ENCODE measurements at regions of chr17 and their contacts with region 1.

Region 1: DNA sequence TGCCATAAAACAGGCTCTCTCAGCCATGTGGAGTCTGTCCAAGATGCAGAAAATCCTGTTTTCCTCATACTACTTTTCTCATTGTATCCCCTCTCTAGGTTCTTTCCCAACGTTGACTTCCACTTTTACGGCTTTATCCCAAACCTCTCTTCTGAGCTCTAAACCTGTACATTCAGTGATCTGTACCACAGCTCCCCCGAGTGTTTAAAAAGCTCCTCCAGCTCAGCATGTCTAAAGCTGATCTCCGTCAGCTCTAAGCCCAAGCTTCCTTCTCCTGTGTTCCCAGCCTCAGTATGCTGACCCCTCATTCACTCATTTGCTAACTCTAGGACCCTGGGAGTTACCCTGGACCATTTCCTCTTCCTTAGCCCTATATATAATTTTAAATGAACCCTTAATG is 144.6 kb downstream of the DNAH9 start:
- DNase-seq: no peak
- ATAC-seq: no peak
- H3K4me3 ChIP-seq: no peak overlapping the region
- H3K27ac ChIP-seq: no peak overlapping the region
- H3K4me1 ChIP-seq: no peaks in the 10 kb centered on the region
- H3K27me3 ChIP-seq: peaks cover 0 to 12% (median 0%) of the 10 kb centered on the region in 7 donors
- CTCF ChIP-seq: peak in 4 of 9 donors; percentile 7 to 43 (median 17)

Region 2: DNA sequence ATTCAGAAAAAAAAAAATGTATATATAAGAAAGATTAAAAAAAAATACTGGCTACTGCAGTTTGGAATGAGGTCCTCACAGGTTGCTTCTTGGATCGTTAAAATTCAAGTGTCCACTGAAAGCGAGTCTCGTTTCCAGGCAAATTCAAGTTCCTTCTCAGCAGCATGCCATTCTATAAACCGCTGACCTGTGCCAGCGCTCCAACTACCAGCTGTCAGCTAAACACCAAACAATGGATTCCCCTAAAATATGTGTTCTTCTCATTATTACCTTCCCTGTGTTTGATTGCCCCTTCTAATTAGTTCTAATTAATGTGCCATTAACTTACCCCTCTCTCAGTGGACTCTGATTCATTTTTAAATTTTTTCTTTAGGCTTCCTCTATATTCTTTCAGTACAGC is 52.2 kb before region 1 on chr17:
- intact Hi-C with region 1: loop called in 1 of 10 experiments (anchors 5 kb)
- DNase-seq: no peak
- ATAC-seq: no peak
- H3K4me3 ChIP-seq: no peak overlapping the region
- H3K27ac ChIP-seq: no peak overlapping the region
- H3K4me1 ChIP-seq: no peaks in the 10 kb centered on the region
- H3K27me3 ChIP-seq: peaks cover 0 to 7% (median 0%) of the 10 kb centered on the region in 7 donors
- CTCF ChIP-seq: no peak

Region 3: DNA sequence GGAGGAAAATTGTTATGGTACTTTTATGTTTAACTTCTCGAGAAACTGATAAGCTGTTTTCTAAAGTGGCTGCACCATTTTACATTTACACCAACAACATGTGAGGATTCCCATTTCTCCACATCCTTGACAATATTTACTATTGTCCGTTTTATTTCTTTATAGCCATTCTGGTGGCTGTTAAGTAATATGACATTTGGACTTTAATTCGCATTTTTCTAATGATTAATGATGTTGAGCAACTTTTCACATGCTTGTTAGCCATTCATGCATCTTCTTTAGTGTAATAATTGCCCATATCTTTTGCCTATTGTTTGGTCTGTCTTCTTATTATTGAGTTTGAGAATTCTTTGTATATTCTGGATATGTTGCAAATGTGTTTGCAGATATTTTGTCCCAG is 30.4 kb before region 1 on chr17:
- intact Hi-C with region 1: no loop called
- DNase-seq: no peak
- ATAC-seq: no peak
- H3K4me3 ChIP-seq: no peak overlapping the region
- H3K27ac ChIP-seq: no peak overlapping the region
- H3K4me1 ChIP-seq: no peaks in the 10 kb centered on the region
- H3K27me3 ChIP-seq: peaks cover 0 to 13% (median 0%) of the 10 kb centered on the region in 7 donors
- CTCF ChIP-seq: no peak

Region 4: DNA sequence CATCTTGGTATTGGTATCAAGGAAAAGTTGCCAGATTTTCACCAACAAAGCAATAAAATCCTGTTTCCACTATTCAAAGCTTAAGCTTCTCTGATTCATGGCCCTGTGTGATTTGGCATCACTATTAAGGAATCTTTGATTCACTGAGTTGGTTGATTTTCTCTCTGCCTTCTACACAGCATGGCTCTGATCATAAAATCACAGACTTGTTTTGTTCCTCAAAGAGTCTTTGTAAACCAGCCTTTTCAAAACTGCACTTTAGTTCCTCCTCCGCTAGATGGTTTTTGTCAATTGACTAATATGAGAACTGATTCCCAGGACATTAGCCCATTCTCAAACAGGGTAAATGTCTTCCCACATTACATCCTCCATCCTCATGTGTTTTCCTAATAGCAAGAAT is 53.0 kb after region 1 on chr17:
- intact Hi-C with region 1: no loop called
- DNase-seq: no peak
- ATAC-seq: no peak
- H3K4me3 ChIP-seq: no peak overlapping the region
- H3K27ac ChIP-seq: no peak overlapping the region
- H3K4me1 ChIP-seq: no peaks in the 10 kb centered on the region
- H3K27me3 ChIP-seq: no peaks in the 10 kb centered on the region
- CTCF ChIP-seq: no peak

Region 5: DNA sequence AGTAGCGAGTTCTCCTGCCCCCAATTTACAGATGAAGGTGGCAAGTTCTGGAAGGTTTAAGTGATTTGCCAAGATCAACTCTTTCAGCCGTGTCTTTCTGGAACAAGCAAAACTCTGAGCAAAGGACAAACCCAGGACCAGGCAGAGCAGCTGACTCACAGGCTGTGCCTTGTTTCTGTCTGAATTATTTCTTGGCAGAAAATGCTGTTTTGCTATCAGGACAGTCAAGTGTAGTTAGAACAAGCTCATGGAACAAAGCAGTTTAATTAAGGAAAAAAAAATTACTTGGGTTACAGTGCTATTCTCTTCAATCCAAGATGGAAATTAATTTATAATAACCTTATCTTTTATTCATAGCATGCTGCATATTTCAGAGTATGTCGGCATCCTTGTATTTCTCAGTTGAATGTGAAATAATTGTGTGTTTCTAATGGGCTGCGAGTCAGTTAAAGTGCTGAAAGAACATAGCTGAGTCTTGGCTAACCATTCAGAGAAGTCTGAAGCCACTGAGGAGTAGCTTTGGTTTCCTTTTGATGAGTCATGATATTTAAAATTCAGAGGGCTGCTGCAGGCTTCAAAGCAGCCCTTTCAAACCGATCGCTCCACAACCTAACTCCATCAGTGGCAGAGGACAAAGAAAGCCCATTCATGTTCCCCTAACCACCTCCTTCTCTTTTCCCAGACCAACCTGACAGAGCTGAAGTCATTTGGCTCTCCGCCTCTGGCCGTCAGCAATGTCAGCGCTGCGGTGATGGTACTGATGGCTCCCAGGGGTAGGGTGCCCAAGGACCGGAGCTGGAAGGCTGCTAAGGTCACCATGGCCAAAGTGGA is 110.7 kb after region 1 on chr17:
- intact Hi-C with region 1: no loop called
- DNase-seq: no peak
- ATAC-seq: peak in 6 of 8 donors; percentile 42 to 81 (median 66)
- H3K4me3 ChIP-seq: no peak overlapping the region
- H3K27ac ChIP-seq: peak overlapping the region in 5 of 10 donors; percentile 3 to 36 (median 25)
- H3K4me1 ChIP-seq: peaks cover 0 to 6% (median 0%) of the 10 kb centered on the region in 9 donors
- H3K27me3 ChIP-seq: peaks cover 0 to 7% (median 0%) of the 10 kb centered on the region in 7 donors
- CTCF ChIP-seq: no peak

Measured in heart right ventricle (tissue), 16 donors.